Thyroid gland (tissue), 4 donors: ENCODE measurements at regions of chr2 and their contacts with region 1.

Region 1: GRCh38 chr2:111030260-111030891 is 90.3 kb upstream of the BCL2L11 start:
- DNase-seq: no peak
- H3K4me3 ChIP-seq: no peak overlapping the region
- H3K27ac ChIP-seq: no peak overlapping the region
- H3K4me1 ChIP-seq: peaks cover 10 to 25% of the 10 kb centered on the region in 2 donors
- H3K27me3 ChIP-seq: no peaks in the 10 kb centered on the region
- CTCF ChIP-seq: no peak
- POLR2A ChIP-seq: no peak

Region 2: DNA sequence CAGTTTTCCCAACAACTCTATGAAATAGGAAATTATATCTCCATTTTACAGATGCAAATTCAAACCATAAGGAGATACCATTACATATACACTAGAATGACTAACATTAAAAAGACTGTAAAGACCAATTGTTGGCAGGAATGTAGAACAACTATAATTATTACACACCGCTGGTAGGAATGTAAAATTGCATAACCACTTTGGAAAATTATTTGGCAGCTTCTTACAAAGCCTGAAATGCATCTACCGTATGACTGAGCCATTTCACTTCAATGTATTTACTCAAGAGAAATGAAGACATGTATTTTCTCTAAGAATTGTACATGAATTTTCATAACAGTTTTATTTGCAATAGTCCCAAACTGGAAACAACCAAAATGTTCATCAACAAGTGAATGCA is 98.7 kb before region 1 on chr2:
- intact Hi-C with region 1: loop called (anchors 10 kb)
- DNase-seq: no peak
- H3K4me3 ChIP-seq: no peak overlapping the region
- H3K27ac ChIP-seq: no peak overlapping the region
- H3K4me1 ChIP-seq: no peaks in the 10 kb centered on the region
- H3K27me3 ChIP-seq: no peaks in the 10 kb centered on the region
- CTCF ChIP-seq: no peak
- POLR2A ChIP-seq: no peak

Region 3: GRCh38 chr2:111184725-111185637 is 154.6 kb after region 1 on chr2:
- intact Hi-C with region 1: no loop called
- DNase-seq: peak; percentile 76 to 80
- H3K4me3 ChIP-seq: no peak overlapping the region
- H3K27ac ChIP-seq: peak overlapping the region; percentile 71 to 92 (median 87)
- H3K4me1 ChIP-seq: peaks cover 29 to 38% of the 10 kb centered on the region in 2 donors
- H3K27me3 ChIP-seq: no peaks in the 10 kb centered on the region
- CTCF ChIP-seq: peak in 1 of 6 experiments; percentile 23
- POLR2A ChIP-seq: no peak

Region 4: GRCh38 chr2:111194835-111195621 is 164.7 kb after region 1 on chr2:
- intact Hi-C with region 1: no loop called
- DNase-seq: no peak
- H3K4me3 ChIP-seq: no peak overlapping the region
- H3K27ac ChIP-seq: no peak overlapping the region
- H3K4me1 ChIP-seq: peaks cover 0 to 8% of the 10 kb centered on the region in 2 donors
- H3K27me3 ChIP-seq: no peaks in the 10 kb centered on the region
- CTCF ChIP-seq: no peak
- POLR2A ChIP-seq: no peak

Region 5: GRCh38 chr2:112290088-112290487 is 1259.7 kb after region 1 on chr2:
- intact Hi-C with region 1: no loop called
- DNase-seq: no peak
- H3K4me3 ChIP-seq: no peak overlapping the region
- H3K27ac ChIP-seq: no peak overlapping the region
- H3K4me1 ChIP-seq: no peaks in the 10 kb centered on the region
- H3K27me3 ChIP-seq: no peaks in the 10 kb centered on the region
- CTCF ChIP-seq: no peak
- POLR2A ChIP-seq: no peak